GM23248 (cell line): ENCODE measurements at regions of chr17 and their contacts with region 1.

Region 1: DNA sequence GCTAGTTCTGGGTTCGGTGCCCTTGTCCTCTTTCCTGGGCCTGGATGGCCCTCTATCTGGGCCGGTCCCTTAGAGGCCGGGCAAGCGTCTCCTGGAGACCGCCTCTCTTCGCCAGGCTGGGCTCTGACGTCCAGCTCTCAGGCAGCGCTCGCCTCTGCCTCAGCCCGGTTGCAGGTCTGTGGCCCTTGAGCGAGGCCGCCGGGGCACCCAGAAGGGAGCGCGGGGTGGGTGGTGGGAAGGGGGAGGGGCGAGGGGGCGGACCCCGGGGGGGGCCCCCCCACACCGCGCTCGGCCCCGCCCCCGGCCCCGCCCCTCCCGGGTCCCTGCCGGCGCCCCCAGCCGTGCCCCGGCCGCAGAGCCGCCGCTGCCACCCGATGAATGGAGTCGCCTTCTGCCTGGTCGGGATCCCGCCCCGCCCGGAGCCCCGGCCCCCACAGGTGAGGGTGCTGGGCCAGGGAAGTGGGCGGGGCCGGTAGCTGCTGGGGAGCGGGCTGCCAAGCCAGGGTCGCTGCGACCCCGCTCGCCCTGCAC is at the start of gene ARHGAP23:
- DNase-seq: peak; percentile 84
- H3K4me3 ChIP-seq: peak within 1 kb of the TSS; percentile 84
- H3K27ac ChIP-seq: peak within 1 kb of the TSS; percentile 58
- H3K4me1 ChIP-seq: peaks cover 25% of the 10 kb centered on the region
- H3K27me3 ChIP-seq: no peaks in the 10 kb centered on the region
- total RNA-seq, gene ARHGAP23: 64.2 and 69.4 TPM in 2 replicates

Region 2: GRCh38 chr17:38485146-38485468 is 56.9 kb after region 1 on chr17:
- in situ Hi-C with region 1: loop called (anchors 10 kb)
- DNase-seq: no peak
- H3K4me3 ChIP-seq: no peak overlapping the region
- H3K27ac ChIP-seq: peak overlapping the region; percentile 51
- H3K4me1 ChIP-seq: 0 out of 2 replicates have a peak, but pooled peaks cover 4% of the 10 kb centered on the region
- H3K27me3 ChIP-seq: no peaks in the 10 kb centered on the region

Region 3: DNA sequence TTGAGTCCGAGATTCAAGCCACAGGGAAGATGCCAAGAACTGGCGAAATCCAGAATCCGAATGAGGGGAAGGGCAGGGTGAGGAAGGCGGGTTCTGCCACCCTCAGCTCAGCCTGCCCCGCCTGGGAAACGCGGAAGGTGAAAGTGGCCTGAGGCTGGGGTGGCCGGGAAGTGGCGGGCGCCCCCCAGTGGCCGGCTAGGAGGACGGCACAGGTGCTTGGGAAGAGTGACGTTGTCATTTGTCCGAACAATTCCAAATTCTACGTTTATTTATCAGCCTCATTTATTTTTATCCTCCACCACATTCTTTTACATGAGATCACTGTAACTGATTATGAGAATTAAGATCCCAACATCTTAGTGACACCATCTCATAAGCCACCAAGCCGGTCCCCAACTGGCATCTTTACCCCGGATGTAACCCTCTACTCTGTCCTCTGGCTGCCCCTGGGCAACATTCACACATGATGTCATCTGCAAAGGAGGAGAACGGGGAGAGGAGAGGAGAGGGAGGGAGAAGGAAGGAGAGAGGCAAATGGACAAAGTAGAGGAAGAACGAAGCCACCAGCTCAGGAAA is 156.3 kb after region 1 on chr17:
- in situ Hi-C with region 1: loop called (anchors 10 kb)
- DNase-seq: peak; percentile 73
- H3K4me3 ChIP-seq: no peak overlapping the region
- H3K27ac ChIP-seq: no peak overlapping the region
- H3K4me1 ChIP-seq: no peaks in the 10 kb centered on the region; the same call in 1 of the 2 replicates
- H3K27me3 ChIP-seq: peaks cover 7% of the 10 kb centered on the region; the same call in 1 of the 2 replicates